ENCODE measurements at regions of chr20 and their contacts with region 1.

Region 1: GRCh38 chr20:34872622-34873224 is at the start of gene GGT7:
- DNase-seq: peak; percentile 92
- CTCF ChIP-seq: peak; percentile 70

Region 2: DNA sequence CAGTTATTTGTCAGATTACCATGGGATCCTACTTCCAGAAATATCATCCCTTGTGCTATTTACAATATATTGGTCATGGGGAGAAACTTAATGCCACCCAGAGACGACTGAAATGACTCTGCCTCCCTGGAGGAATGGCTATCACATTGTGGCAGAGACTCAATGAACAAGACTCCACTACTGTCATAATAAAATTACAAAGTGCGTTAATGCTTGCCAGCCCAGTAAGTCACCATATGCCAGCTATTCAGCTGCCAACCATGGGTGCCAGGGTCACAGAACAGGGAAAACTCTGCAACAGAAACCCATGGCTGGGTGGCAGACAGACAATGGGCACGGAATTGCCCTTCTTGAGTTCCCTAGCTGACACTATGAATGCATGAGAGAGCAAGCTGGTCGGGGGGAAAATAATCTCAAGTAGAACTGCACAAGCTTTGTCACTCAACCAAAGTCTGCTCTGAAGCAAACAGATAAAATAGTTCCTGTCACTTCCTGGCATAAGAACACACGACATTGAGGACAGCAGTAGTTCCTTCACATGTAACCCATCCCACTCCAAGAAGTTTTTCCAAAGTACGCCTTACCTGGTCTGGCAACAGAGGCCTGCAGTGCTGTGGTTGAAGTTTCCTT is 136.5 kb before region 1 on chr20:
- in situ Hi-C with region 1: no loop called
- DNase-seq: no peak
- CTCF ChIP-seq: no peak

Region 3: DNA sequence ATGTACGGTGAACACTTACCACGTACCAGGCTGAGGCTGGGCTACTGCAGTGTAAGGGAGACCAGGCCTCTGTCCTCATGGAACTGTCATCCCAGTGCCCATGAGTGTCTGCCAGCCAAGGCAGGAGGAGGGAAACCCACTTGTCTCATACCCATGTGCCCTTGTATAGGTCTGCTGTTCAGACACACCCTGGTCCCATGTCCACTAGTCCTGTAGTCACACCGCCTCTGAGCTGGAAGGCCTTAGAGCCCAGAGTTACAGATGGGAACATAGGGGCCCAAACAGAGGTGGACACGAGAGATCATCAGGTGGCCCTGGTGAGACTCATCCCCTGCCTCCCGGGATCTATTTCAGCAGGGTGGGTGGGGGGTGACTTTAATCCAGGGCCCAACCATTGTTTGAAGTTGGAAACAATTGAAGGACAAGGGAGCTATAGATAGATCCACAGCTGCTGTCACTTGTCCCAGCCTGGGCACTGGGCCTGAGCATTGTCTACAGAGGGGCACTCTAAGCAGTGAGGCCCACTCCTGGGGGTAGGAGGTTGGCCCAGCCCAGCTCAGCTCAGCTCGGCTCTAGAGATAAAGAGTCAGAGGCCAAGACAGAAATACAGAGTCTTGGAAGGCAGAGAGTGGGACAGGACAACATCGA is 97.6 kb after region 1 on chr20:
- in situ Hi-C with region 1: no loop called
- DNase-seq: no peak
- CTCF ChIP-seq: no peak

Region 4: GRCh38 chr20:34988191-34988540 is 115.4 kb after region 1 on chr20:
- in situ Hi-C with region 1: no loop called
- DNase-seq: no peak
- CTCF ChIP-seq: no peak

Region 5: DNA sequence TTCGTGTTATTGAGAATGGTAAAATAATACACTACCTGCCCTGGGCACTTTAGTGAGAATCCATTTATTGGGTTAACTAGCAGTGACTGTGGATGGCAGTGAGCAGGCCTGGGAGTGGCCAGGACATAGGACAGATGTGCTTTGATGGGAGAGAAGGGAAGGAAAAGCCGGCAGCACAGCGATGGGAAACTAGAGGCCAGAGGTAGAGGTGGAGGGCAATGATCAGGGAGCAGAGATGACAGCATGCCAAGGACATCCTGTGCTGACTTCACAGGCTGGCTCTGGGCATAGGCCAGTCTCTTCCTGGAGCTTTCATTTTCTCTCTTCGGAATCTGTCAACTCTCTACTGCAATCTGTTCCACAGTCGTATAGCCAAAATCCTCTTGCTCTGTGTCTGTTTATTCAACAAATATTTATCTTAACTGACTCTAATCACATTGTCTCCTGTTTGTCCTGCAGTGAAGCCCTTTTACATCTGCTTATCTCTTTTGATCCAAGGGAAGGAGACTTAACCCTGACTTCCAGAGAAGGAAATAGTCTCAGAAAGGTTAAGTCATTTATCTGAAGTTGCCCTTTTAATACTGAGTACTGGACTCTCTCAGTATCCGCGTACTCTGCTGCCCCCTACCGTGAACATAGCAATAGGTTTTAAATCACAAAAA is 335.4 kb after region 1 on chr20:
- in situ Hi-C with region 1: loop called (anchors 25 kb)
- DNase-seq: peak; percentile 68
- CTCF ChIP-seq: peak; percentile 75